Right ventricle myocardium superior (tissue), 1 donor: ENCODE measurements at regions of chr2 and their contacts with region 1.

Region 1: DNA sequence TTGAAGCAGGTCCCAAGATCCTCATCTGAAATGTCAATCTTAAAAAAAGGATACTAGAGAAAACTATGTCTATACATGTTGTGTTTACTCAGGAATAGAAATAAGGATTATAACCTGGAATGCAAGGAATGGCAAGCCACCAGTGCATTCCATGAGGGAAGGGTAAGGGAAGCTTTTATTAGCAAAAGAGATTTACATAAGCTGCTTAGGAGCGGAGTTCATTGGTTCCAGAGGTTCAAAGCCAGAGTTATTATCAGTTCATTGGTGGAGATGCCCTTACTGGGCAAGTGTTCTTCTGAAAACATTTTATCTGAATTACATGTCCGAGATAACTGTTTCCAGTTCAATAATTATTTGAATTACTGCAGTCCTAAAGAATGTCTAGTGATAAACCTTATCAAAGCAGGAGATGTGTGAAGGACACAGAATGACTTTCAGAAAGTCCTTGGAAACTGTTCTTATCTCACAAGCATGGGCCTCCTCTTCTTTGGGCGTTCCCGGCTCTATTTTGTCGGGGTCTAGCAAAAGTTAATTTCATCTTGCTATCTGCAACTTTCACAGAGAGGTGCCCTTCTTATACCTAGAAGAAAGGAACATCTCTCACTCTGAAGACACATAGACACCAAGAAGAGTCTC is 23.5 kb downstream of the COMMD1 start:
- DNase-seq: no peak
- ATAC-seq: peak; percentile 52

Region 2: GRCh38 chr2:61736953-61737352 is 192.0 kb before region 1 on chr2:
- intact Hi-C with region 1: no loop called
- DNase-seq: no peak
- ATAC-seq: no peak

Region 3: DNA sequence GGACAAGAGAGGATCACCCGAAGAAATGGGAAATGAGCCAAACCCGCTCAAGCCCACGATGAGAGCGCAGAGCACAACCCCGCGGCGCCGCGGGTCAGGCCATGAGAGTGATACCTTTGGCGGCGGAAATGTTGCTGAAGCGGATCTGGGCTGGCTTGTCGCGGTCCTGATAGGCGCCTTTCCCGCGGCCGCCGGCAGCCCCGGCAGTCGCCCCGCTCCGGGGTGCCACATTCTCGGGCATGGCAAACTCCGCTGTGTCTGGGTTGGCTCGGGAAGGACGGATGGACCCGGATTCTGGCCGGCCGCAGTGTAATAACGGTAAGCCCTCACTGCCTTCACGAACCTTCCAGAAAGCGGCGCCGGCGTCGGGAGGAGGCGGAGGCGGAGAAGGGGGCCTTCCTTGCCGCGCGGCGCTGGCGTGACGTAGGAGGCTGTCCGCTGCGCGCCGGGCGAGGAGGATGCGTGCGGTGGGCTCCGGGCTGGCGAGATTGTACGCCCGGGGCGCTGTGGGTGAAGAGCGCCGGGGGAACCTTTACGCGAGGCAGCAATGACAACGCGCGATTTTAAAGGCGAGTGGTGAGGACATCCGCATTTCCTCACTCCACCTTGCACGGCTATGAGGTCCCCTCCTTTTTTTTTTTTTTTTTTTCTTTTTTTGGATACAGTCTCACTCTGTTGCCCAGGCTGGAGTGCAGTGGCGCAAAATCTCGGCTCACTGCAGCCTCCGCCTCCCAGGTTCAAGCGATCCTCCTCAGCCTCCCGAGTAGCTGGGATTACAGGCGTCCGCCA is 40.5 kb before region 1 on chr2 and contains the start of gene CCT4:
- intact Hi-C with region 1: no loop called
- DNase-seq: peak; percentile 95
- ATAC-seq: peak; percentile 94
- total RNA-seq, gene CCT4: 96.0 TPM

Region 4: GRCh38 chr2:62202019-62202722 is 273.2 kb after region 1 on chr2:
- intact Hi-C with region 1: loop called (anchors 10 kb)
- DNase-seq: no peak
- ATAC-seq: no peak